ENCODE measurements at regions of chr1 and their contacts with region 1.

Region 1: DNA sequence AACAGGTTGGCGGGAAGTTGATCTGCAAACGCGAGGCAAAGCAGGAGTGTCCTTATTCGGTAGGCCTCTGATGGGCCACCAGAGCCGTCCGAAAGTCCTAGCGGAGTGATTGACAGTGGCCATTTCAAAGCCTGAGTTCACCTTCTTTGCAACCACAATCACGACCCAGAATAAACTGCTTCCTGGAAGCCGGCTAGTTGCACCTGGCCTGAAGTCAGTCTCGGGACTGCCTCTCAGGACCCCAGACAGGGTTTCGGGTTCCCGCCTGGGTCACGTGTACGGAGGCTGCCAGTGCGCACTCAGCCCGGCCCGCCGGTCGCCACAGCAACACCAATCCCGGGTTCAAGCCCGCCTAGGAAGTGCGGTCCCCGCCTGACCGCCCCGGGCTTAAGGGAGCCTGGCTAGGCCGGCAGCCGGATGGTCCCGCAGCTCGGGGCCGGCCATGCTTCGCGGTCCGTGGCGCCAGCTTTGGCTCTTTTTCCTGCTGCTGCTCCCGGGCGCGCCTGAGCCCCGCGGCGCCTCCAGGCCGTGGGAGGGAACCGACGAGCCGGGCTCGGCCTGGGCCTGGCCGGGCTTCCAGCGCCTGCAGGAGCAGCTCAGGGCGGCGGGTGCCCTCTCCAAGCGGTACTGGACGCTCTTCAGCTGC is at the start of gene TOR3A:
- DNase-seq: peak; percentile 91
- H3K4me3 ChIP-seq: peak within 1 kb of the TSS; percentile 78
- H3K27ac ChIP-seq: peak within 1 kb of the TSS; percentile 68
- H3K4me1 ChIP-seq: peaks cover 18% of the 10 kb centered on the region
- H3K27me3 ChIP-seq: no peaks in the 10 kb centered on the region
- total RNA-seq, gene TOR3A: 44.8 and 45.5 TPM in 2 replicates

Region 2: DNA sequence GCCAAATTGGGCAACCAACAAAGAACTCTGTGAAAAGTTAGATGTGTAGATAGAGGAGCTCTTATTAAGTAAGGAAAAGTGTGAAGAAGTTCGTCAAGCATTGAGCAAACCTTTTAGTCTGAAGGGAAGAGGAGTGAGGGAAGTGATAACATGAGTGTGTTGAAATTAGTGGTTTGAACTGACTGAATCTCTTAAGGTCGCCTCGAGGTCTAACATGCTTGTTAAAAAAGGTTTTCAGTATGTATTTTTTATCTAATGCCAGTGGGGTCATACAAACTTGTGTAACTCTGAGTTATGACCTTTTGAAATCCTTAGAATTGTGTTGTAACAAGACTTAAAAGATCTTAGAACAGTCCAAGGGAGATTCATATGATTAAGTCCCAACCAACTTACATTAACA is 245.9 kb after region 1 on chr1:
- in situ Hi-C with region 1: loop called (anchors 25 kb)
- DNase-seq: no peak
- H3K4me3 ChIP-seq: no peak overlapping the region
- H3K27ac ChIP-seq: no peak overlapping the region
- H3K4me1 ChIP-seq: no peaks in the 10 kb centered on the region
- H3K27me3 ChIP-seq: no peaks in the 10 kb centered on the region

Measured in GM23248 (cell line).